Dorsolateral prefrontal cortex (tissue), 120 donors: ENCODE measurements at regions of chr15 and their contacts with region 1.

Region 1: DNA sequence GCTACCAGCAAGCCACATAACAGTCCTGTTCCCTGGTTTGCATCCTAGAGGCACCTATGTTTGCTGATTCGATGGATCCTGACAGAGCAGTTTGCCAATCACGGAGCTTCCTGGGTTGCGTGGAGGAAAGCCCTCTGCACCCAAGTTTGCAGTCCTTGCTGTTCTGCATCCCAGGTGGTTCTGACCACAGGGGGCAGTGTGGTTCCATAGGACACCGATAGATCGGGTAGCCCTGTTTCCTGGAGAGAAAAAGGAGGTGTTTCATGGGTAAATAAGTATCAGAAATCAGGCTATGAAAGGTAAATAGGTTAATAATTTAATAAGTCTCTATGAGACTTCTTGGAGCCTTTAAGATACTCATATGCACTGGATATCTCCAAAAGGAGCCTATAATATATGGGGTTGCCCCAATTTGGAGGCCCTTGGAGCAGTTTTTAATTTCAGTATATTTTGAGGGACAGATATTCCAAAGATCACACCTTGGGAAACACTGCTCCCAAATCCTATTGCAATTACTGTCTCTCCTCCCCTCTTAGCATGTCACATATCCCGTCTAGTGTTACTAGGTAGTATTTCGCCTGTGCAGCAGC is 194.6 kb upstream of the TPM1 start:
- DNase-seq: peak; percentile 76 to 92 (median 85)
- H3K4me3 ChIP-seq: no peak overlapping the region
- H3K27ac ChIP-seq: peak overlapping the region in 1 of 59 donors; percentile 3
- H3K27me3 ChIP-seq: no peaks in the 10 kb centered on the region
- CTCF ChIP-seq: peak; percentile 37 to 93 (median 86)

Region 2: GRCh38 chr15:62665449-62665848 is 182.5 kb before region 1 on chr15:
- intact Hi-C with region 1: no loop called
- DNase-seq: no peak
- H3K4me3 ChIP-seq: no peak overlapping the region
- H3K27ac ChIP-seq: no peak overlapping the region
- H3K27me3 ChIP-seq: no peaks in the 10 kb centered on the region
- CTCF ChIP-seq: no peak

Region 3: GRCh38 chr15:62739082-62739481 is 108.9 kb before region 1 on chr15:
- intact Hi-C with region 1: no loop called
- DNase-seq: no peak
- H3K4me3 ChIP-seq: no peak overlapping the region
- H3K27ac ChIP-seq: peak overlapping the region in 58 of 59 donors; percentile 73 to 96 (median 88)
- H3K27me3 ChIP-seq: no peaks in the 10 kb centered on the region
- CTCF ChIP-seq: no peak

Region 4: DNA sequence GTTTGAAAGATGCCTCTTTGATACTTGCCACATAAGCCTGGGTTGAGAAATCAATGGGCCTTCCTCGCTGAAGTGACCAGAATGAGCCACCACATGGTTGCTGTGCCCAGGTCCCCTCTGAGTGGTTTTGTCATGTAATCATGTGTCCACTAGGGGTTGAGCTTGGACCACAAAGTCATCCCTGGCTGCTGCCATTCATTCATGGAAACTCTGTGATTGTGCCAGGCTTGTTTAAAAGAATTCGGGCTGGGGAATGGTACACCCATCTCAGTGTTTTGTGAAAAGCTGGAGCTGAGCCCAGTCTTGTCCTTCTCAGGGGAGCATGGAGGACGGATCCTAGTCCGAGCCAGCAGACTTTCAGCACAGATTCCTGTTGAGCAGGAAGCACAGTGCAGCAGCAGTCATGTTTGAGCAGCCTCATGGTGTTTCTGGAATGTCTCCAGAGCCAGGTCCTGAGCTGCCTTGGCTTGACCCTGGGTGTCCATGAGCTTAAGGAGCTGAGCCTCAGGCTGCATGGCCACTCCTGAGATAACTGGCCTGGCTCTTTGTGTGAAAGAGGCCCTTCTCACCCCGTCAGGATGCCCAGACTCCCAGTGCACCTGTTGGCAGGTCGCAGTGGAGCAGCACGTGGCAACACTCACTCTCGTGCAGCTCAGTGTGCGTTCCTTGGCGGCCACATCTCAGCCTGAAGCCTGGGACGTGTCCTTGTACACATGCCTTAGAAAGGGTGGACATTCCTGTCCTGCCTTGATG is 65.8 kb before region 1 on chr15:
- intact Hi-C with region 1: loop called in 1 of 2 experiments (anchors 2 kb)
- DNase-seq: peak in 8 of 10 donors; percentile 51 to 73 (median 60)
- H3K4me3 ChIP-seq: no peak overlapping the region
- H3K27ac ChIP-seq: peak overlapping the region in 32 of 59 donors; percentile 3 to 74 (median 34)
- H3K27me3 ChIP-seq: no peaks in the 10 kb centered on the region
- CTCF ChIP-seq: peak; percentile 45 to 85 (median 74)

Region 5: GRCh38 chr15:62799919-62800318 is 48.1 kb before region 1 on chr15:
- intact Hi-C with region 1: loop called in 1 of 2 experiments (anchors 5 kb)
- DNase-seq: no peak
- H3K4me3 ChIP-seq: no peak overlapping the region
- H3K27ac ChIP-seq: no peak overlapping the region
- H3K27me3 ChIP-seq: no peaks in the 10 kb centered on the region
- CTCF ChIP-seq: no peak

Region 6: GRCh38 chr15:62940755-62941361 is 92.9 kb after region 1 on chr15:
- intact Hi-C with region 1: loop called in 1 of 2 experiments (anchors 5 kb)
- DNase-seq: peak; percentile 36 to 86 (median 72)
- H3K4me3 ChIP-seq: peak overlapping the region in 5 of 59 donors; percentile 7 to 29 (median 11)
- H3K27ac ChIP-seq: peak overlapping the region; percentile 17 to 95 (median 84)
- H3K27me3 ChIP-seq: no peaks in the 10 kb centered on the region
- CTCF ChIP-seq: peak in 1 of 56 donors; percentile 19

Region 7: GRCh38 chr15:63048115-63048775 is 200.2 kb after region 1 on chr15:
- intact Hi-C with region 1: loop called in 1 of 2 experiments (anchors 2 kb)
- DNase-seq: peak; percentile 75 to 90 (median 83)
- H3K4me3 ChIP-seq: peak overlapping the region; percentile 58 to 98 (median 90)
- H3K27ac ChIP-seq: peak overlapping the region in 58 of 59 donors; percentile 64 to 95 (median 87)
- H3K27me3 ChIP-seq: peaks cover 0 to 25% (median 4%) of the 10 kb centered on the region in 45 donors
- CTCF ChIP-seq: peak; percentile 74 to 97 (median 90)

Region 8: DNA sequence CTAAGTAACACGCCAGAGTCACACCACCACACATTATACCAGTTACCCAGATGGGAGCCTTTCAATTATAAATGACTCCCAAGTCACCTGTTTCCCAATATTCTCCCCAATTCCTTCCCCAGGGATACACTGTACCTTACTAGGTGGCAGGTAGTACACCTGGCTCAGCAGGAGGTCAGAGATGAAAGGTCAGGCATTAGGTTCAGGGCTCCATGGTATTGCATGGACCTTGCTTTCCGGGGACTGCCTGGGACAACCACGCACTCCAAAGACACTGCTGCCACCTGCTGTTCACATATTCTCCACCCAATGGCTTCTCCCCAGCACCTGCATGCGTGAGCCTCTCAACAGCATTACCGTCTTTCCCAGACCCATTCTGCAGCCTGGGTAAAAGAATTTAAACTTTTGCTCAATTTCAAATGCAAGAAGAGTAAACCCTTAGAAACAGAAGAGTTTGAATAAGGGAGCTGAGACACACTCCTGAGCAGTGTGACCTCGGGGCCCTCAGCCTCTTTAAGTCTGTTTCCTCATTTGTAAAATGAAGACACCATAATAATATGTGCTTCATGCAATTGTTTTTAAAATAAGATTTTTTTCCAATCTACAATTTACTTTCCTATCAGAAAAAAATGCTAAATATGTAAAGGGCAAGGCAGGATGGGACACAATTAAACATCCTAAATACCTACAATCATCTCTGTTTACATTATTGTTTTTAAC is 245.7 kb after region 1 on chr15:
- intact Hi-C with region 1: loop called (anchors 2 kb)
- DNase-seq: peak; percentile 59 to 86 (median 80)
- H3K4me3 ChIP-seq: no peak overlapping the region
- H3K27ac ChIP-seq: no peak overlapping the region
- H3K27me3 ChIP-seq: no peaks in the 10 kb centered on the region
- CTCF ChIP-seq: peak; percentile 50 to 98 (median 90)